ENCODE measurements at regions of chr3 and their contacts with region 1.

Region 1: GRCh38 chr3:46998121-46998851 is 18.8 kb downstream of the NBEAL2 start:
- DNase-seq: peak; percentile 65 to 73 (median 69)
- H3K4me3 ChIP-seq: no peak overlapping the region
- H3K4me3 Mint-ChIP-seq: no peak overlapping the region
- H3K27ac ChIP-seq: no peak overlapping the region
- H3K27ac Mint-ChIP-seq: peak overlapping the region; percentile 65 to 90 (median 85)
- H3K4me1 ChIP-seq: peaks cover 23% of the 10 kb centered on the region
- H3K4me1 Mint-ChIP-seq: peaks cover 11 to 29% (median 19%) of the 10 kb centered on the region in 4 donors
- H3K27me3 ChIP-seq: no peaks in the 10 kb centered on the region
- H3K27me3 Mint-ChIP-seq: no peaks in the 10 kb centered on the region

Region 2: GRCh38 chr3:46866720-46867549 is 131.4 kb before region 1 on chr3:
- CTCF ChIA-PET with region 1: interaction called, 11 read pairs
- POLR2A ChIA-PET with region 1: no interaction called
- intact Hi-C with region 1: loop called (anchors 1 kb)
- DNase-seq: peak; percentile 59 to 71 (median 66)
- H3K4me3 ChIP-seq: no peak overlapping the region
- H3K4me3 Mint-ChIP-seq: no peak overlapping the region
- H3K27ac ChIP-seq: no peak overlapping the region
- H3K27ac Mint-ChIP-seq: peak overlapping the region in 1 of 7 donors; percentile 31
- H3K4me1 ChIP-seq: no peaks in the 10 kb centered on the region
- H3K4me1 Mint-ChIP-seq: peaks cover 0 to 5% (median 2%) of the 10 kb centered on the region in 4 donors
- H3K27me3 ChIP-seq: no peaks in the 10 kb centered on the region
- H3K27me3 Mint-ChIP-seq: peaks cover 3 to 7% of the 10 kb centered on the region in 2 donors

Region 3: GRCh38 chr3:46923559-46924350 is 74.5 kb before region 1 on chr3:
- CTCF ChIA-PET with region 1: interaction called, 33 read pairs
- POLR2A ChIA-PET with region 1: interaction called, 4 read pairs
- intact Hi-C with region 1: loop called (anchors 1 kb)
- DNase-seq: peak in 4 of 5 donors; percentile 31 to 48 (median 37)
- H3K4me3 ChIP-seq: no peak overlapping the region
- H3K4me3 Mint-ChIP-seq: no peak overlapping the region
- H3K27ac ChIP-seq: no peak overlapping the region
- H3K27ac Mint-ChIP-seq: peak overlapping the region in 6 of 7 donors; percentile 37 to 91 (median 79)
- H3K4me1 ChIP-seq: peaks cover 31% of the 10 kb centered on the region
- H3K4me1 Mint-ChIP-seq: peaks cover 22 to 45% (median 28%) of the 10 kb centered on the region in 4 donors
- H3K27me3 ChIP-seq: no peaks in the 10 kb centered on the region
- H3K27me3 Mint-ChIP-seq: no peaks in the 10 kb centered on the region

Region 4: GRCh38 chr3:46960081-46960701 is 38.1 kb before region 1 on chr3:
- CTCF ChIA-PET with region 1: interaction called, 16 read pairs
- POLR2A ChIA-PET with region 1: interaction called, 6 read pairs
- intact Hi-C with region 1: no loop called
- DNase-seq: no peak
- H3K4me3 ChIP-seq: no peak overlapping the region
- H3K4me3 Mint-ChIP-seq: peak overlapping the region in 7 of 8 donors; percentile 29 to 79 (median 57)
- H3K27ac ChIP-seq: peak overlapping the region; percentile 24
- H3K27ac Mint-ChIP-seq: peak overlapping the region in 6 of 7 donors; percentile 7 to 92 (median 85)
- H3K4me1 ChIP-seq: peaks cover 74% of the 10 kb centered on the region
- H3K4me1 Mint-ChIP-seq: peaks cover 61 to 81% (median 70%) of the 10 kb centered on the region in 4 donors
- H3K27me3 ChIP-seq: no peaks in the 10 kb centered on the region
- H3K27me3 Mint-ChIP-seq: no peaks in the 10 kb centered on the region

Region 5: DNA sequence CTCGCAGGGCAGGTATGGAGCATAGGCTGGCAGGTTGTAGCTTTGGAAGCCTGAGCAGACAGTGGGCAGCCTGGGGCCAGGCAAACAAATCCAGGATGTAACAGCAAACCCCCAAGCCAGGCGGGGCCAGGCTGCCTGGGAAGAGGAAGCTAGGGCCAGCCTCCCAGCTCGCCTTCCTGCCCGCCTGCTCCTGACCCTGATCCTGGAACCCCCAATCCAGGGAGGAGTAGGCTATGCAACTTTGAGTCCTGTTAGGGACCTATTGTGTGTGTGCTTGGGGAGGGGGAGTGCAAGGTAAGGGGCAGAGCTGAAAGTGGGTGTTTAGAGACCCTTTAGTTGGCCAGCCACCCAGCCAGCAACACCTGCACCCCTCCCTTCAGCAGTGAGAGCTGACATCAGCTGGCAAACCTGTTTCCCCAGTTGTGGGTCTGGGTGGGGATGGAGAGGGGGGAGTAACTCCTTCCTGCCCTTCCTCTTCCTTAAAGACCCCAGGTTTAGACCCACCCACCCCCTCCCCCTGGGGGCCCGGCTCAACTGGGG is 16.3 kb before region 1 on chr3:
- CTCF ChIA-PET with region 1: interaction called, 28 read pairs
- POLR2A ChIA-PET with region 1: interaction called, 222 read pairs
- intact Hi-C with region 1: loop called (anchors 1 kb)
- DNase-seq: peak in 1 of 5 donors; percentile 28
- H3K4me3 ChIP-seq: peak overlapping the region in 1 of 2 donors; percentile 23
- H3K4me3 Mint-ChIP-seq: peak overlapping the region; percentile 78 to 94 (median 91)
- H3K27ac ChIP-seq: peak overlapping the region; percentile 91
- H3K27ac Mint-ChIP-seq: peak overlapping the region in 6 of 7 donors; percentile 64 to 96 (median 90)
- H3K4me1 ChIP-seq: peaks cover 89% of the 10 kb centered on the region
- H3K4me1 Mint-ChIP-seq: peaks cover 53 to 88% (median 72%) of the 10 kb centered on the region in 4 donors
- H3K27me3 ChIP-seq: no peaks in the 10 kb centered on the region
- H3K27me3 Mint-ChIP-seq: no peaks in the 10 kb centered on the region

Region 6: DNA sequence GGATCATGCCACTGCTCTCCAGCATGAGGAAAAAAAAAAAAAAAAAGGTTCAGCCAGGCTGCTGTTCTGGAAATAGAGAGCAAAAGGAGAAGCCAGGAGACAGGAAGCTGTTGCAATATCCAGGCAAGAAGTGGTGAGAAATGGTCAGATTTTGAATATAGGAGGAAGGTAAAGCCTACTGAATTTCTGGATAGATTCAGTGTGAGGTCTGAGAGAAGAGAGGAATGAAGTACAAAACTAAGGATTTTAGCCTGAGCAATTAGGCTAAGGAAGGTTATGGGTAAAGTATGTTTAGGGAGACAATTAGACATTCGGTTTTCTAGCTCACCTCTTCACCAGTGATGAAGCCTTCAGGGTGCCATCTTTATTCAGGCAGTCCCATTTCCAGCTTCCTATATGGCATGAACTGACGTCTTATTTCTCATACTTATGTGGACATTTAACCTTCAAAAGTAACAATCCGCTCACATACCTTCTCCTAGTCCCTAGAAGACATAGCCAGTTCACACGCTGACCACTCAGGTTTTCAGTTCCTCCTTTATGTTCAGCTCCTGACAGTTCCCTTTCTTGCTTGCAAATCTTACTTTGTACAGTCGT is 227.1 kb after region 1 on chr3:
- CTCF ChIA-PET with region 1: no interaction called
- POLR2A ChIA-PET with region 1: no interaction called
- intact Hi-C with region 1: no loop called
- DNase-seq: no peak
- H3K4me3 ChIP-seq: no peak overlapping the region
- H3K4me3 Mint-ChIP-seq: no peak overlapping the region
- H3K27ac ChIP-seq: no peak overlapping the region
- H3K27ac Mint-ChIP-seq: no peak overlapping the region
- H3K4me1 ChIP-seq: no peaks in the 10 kb centered on the region
- H3K4me1 Mint-ChIP-seq: no peaks in the 10 kb centered on the region
- H3K27me3 ChIP-seq: no peaks in the 10 kb centered on the region
- H3K27me3 Mint-ChIP-seq: no peaks in the 10 kb centered on the region

Measured in CD4-positive, alpha-beta memory T cell (primary cell).